Ascending aorta (tissue), 2 donors: ENCODE measurements at regions of chr5 and their contacts with region 1.

Region 1: GRCh38 chr5:137498736-137499505 is at the start of gene SPOCK1:
- DNase-seq: peak in 1 of 2 donors; percentile 83
- H3K4me3 ChIP-seq: peak within 1 kb of the TSS; percentile 68 to 90
- H3K27ac ChIP-seq: no peak within 1 kb of the TSS
- H3K4me1 ChIP-seq: peaks cover 4 to 6% of the 10 kb centered on the region in 2 donors
- H3K27me3 ChIP-seq: no peaks in the 10 kb centered on the region
- CTCF ChIP-seq: peak in 2 of 3 experiments; percentile 35 to 84
- total RNA-seq, gene SPOCK1: 81.2 TPM

Region 2: DNA sequence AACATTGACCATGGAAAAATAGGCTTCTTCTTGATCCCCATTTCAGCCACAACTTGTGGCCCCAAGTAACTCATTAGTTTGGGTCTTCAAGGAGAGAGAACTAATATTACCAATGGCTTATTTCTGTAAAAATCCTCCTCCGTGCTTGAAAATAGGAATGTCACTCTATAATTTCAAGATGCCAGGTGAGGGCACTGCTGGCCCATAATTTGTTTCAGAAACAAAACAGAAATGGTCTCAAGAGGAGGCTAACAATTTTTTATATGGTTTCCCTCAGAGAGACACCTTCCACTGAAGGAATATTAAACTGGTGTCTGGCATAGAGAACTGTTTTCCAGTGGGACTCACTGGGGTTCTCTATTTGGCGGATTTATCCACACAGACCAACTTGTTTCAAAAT is 696.5 kb before region 1 on chr5:
- intact Hi-C with region 1: loop called (anchors 2 kb)
- DNase-seq: no peak
- H3K4me3 ChIP-seq: no peak overlapping the region
- H3K27ac ChIP-seq: no peak overlapping the region
- H3K4me1 ChIP-seq: no peaks in the 10 kb centered on the region
- H3K27me3 ChIP-seq: no peaks in the 10 kb centered on the region
- CTCF ChIP-seq: peak in 2 of 3 experiments; percentile 28

Region 3: DNA sequence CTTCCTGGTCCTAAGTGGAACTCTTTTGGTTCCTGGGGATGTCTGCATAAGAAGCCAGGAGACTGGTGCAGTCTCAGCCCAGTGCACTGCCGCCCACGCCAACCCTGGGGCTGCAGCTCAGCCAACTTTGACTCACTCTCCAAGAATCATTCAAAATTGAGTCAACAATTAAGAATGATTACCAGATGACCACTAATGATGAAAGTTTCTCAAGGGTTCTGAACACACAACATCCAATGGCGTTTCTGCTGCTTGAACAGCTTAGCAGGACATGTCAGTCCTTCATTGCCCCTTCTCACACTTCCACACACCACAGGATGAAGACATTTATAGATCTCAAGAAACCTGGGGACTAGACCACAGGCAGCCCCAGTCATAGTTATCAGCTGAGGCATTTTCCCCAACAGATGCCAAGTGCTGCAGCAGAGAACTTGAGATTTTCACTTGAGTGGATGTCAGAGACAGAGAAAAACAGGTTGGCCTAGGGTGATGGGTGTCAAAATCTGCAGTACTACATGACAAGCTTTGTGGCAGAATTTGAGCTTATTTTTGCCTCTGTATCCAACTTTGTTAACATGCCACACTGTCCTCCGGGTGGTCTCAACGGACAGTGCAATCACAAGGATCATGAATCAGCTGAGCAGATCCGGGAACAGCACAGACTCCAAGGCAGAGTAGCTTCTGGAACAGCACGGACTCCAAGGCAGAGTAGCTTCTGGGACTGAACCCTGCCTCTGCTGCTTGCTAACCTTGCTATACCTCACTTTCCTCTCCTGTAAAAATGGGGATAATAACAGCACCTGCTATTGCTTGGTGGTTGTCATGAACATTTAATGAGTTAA is 355.9 kb before region 1 on chr5:
- intact Hi-C with region 1: loop called (anchors 10 kb)
- DNase-seq: peak in 1 of 2 donors; percentile 85
- H3K4me3 ChIP-seq: no peak overlapping the region
- H3K27ac ChIP-seq: peak overlapping the region; percentile 46 to 73
- H3K4me1 ChIP-seq: peaks cover 6 to 34% of the 10 kb centered on the region in 2 donors
- H3K27me3 ChIP-seq: no peaks in the 10 kb centered on the region
- CTCF ChIP-seq: no peak

Region 4: DNA sequence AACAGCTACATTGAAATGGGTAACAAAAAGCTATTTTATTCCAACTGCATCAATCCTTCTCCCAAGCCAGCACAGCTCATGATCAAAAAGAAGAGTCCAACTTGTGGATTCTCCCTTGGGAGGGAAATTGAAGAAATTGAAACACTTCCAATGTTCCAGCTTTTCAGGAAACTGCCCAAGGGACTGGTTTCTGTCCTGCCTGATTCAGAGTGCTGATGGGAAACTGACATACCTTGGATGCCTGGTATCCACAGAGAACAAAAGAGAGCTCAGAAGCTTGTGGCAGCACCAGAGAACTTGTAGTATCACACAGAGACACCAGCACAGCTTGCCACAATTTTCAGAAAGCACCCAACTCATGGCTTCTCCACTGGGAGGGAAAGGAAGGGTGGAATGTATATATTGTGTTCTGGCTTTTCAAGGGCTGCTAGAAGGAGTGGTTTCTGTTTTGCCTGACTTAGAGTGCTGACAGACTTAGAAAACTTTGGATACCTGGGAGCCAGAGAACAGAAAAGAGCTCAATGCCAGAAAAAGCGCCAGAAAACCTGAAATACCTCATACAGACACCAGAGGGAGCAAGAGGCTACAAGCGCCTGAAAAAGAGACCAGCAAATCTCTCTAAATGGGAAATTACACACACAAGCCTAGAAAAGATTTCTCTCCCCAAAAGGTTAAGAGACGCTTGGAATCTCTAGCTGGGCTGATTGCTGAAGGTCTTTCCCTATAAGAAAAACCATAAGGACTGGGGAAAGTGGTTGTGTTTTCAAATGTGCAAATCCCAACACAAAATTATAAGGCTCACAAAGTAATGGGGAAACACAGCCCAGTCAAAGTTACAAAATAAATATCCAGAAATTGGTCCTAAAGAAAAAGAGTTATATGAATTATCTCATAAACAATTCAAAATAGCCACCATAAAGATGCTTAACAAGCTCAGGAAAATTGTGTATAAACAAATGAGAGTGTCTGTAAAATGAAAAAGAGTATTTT is 178.6 kb before region 1 on chr5:
- intact Hi-C with region 1: loop called (anchors 1 kb)
- DNase-seq: no peak
- H3K4me3 ChIP-seq: no peak overlapping the region
- H3K27ac ChIP-seq: no peak overlapping the region
- H3K4me1 ChIP-seq: peaks cover 6 to 13% of the 10 kb centered on the region in 2 donors
- H3K27me3 ChIP-seq: no peaks in the 10 kb centered on the region
- CTCF ChIP-seq: peak; percentile 62 to 85 (median 75)

Region 5: GRCh38 chr5:137466889-137467288 is 32.0 kb before region 1 on chr5:
- intact Hi-C with region 1: loop called (anchors 2 kb)
- DNase-seq: peak; percentile 54 to 80
- H3K4me3 ChIP-seq: no peak overlapping the region
- H3K27ac ChIP-seq: peak overlapping the region; percentile 25 to 44
- H3K4me1 ChIP-seq: no peaks in the 10 kb centered on the region
- H3K27me3 ChIP-seq: no peaks in the 10 kb centered on the region
- CTCF ChIP-seq: no peak